Activated CD8-positive, alpha-beta T cell treated with anti-CD3 and anti-CD28 coated beads, Interleukin-2, amount 10 ng/mL, durations not matched to agents 7 days and 5 days (primary cell): ENCODE measurements at regions of chr1 and their contacts with region 1.

Region 1: DNA sequence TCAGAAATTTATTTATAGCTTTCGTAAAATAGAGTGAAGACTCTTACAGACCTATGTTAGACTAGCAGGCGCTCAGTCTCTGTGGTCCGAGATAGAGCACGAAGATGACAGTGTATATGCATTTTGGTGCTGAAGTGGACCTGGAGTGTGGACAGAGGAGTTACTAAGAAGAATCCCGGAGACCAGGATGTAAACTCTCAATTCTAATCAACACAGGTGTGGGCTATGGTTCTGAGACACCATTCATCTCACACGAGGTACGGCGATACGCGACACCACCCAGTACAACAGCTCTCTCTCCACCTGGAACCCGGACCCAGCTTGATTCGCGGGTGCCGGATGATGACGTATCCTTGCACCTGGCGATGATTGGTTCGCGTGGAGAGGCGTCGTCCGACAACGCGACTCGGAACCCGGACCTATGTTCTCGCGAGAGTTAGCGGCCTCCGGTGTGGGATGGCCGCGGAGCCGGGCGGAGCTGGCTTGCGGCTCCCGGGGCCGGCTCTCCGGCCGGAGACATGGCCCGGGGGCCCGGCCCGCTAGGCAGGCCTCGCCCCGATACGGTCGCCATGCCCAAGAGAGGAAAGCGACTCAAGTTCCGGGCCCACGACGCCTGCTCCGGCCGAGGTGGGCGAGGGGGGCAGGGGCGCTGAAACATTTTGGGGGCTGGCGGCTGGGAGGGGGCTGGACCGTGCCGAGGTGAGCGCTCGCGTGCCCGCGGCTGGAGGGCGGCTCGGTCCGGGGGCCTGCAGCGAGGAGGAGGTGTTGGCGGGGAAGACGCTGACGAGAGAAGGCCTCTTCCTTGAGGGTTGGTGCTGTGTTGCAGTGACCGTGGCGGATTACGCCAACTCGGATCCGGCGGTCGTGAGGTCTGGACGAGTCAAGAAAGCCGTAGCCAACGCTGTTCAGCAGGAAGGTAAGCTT is at the start of gene TMEM183A:
- DNase-seq: peak; percentile 98
- ATAC-seq: peak; percentile 91
- H3K4me3 Mint-ChIP-seq: peak within 1 kb of the TSS; percentile 88
- H3K27ac Mint-ChIP-seq: peak within 1 kb of the TSS; percentile 96
- H3K4me1 Mint-ChIP-seq: peaks cover 30% of the 10 kb centered on the region
- H3K27me3 Mint-ChIP-seq: no peaks in the 10 kb centered on the region
- total RNA-seq, gene TMEM183A: 78.3 to 81.3 TPM

Region 2: DNA sequence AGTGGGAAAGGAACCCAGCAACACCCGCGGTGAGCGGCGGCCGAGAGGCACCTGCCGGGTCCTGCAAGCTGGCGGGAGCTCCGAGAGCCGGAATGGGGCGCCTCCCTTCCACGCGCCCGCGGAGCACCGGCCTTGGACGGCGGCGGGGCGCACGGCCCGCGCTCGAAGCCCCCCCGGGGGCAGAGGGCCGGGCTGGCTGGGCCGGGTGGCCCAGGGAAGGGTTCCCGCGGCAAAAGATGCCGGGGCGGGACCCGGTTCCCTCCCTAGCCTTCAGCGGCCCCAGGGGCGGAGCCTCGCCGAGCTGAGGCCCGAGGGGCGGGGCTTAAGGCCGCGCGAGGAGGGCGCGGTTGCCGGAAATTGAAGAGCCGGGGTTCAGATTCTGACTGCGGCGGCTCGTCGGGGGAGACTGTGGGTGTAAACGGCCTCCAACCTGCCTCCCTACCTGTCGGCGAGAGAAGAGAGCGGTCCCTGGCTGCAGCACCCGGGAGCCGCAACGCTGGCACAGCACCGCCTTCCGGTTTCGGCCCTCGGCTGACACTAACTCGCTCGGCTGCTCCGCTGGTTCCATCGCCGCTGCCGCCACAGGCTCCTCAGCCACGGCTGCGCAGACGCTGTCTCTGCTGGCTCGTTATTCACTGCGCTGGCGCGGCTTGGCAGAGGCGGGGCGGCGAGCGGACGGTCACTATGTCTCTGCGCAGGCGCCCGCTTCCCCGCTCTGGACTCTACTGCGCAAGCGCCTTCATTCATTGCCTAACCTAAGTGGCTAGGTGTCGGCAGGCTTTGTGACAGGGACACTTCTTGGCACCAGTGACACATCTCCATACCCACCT is 118.5 kb before region 1 on chr1 and contains the start of gene RABIF:
- CTCF ChIA-PET with region 1: no interaction called
- POLR2A ChIA-PET with region 1: interaction called, 12 read pairs
- DNase-seq: peak; percentile 97
- ATAC-seq: peak; percentile 96
- H3K4me3 Mint-ChIP-seq: peak within 1 kb of the TSS; percentile 94
- H3K27ac Mint-ChIP-seq: peak within 1 kb of the TSS; percentile 98
- H3K4me1 Mint-ChIP-seq: peaks cover 19% of the 10 kb centered on the region
- H3K27me3 Mint-ChIP-seq: no peaks in the 10 kb centered on the region
- total RNA-seq, gene RABIF: 13.6 TPM

Region 3: DNA sequence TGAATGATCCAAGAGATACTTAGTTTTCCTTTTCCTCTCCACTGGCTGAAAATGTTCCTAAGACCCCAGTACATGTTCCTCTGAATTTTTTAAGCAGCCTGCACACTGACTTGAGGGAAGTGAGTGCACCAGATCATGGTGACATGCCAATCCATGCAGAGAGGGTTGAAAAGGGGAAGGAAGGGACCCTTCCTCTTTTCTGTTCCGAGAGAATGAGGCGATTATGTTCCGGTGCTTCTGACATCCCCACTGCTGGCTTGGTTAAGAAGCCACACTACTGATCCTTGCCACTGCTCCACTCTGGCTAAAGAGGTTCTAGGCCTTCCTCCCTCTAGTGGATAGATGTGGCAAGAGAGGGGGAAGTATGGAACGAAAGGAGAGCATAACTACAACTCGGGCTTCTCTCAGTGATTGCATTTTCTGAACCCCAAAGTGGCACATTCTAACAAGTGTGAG is 38.3 kb before region 1 on chr1:
- CTCF ChIA-PET with region 1: interaction called, 6 read pairs
- POLR2A ChIA-PET with region 1: interaction called, 19 read pairs
- DNase-seq: peak; percentile 60
- ATAC-seq: peak; percentile 54
- H3K4me3 Mint-ChIP-seq: no peak overlapping the region
- H3K27ac Mint-ChIP-seq: peak overlapping the region; percentile 44
- H3K4me1 Mint-ChIP-seq: peaks cover 30% of the 10 kb centered on the region
- H3K27me3 Mint-ChIP-seq: peaks cover 4% of the 10 kb centered on the region

Region 4: GRCh38 chr1:203026031-203026989 is 19.1 kb after region 1 on chr1 and contains the start of gene PPFIA4:
- CTCF ChIA-PET with region 1: interaction called, 3 read pairs
- POLR2A ChIA-PET with region 1: interaction called, 12 read pairs
- DNase-seq: peak; percentile 90
- ATAC-seq: peak; percentile 94
- H3K4me3 Mint-ChIP-seq: peak within 1 kb of the TSS; percentile 73
- H3K27ac Mint-ChIP-seq: peak within 1 kb of the TSS; percentile 70
- H3K4me1 Mint-ChIP-seq: peaks cover 21% of the 10 kb centered on the region
- H3K27me3 Mint-ChIP-seq: peaks cover 8% of the 10 kb centered on the region
- total RNA-seq, gene PPFIA4: 31.9 to 32.0 TPM

Region 5: GRCh38 chr1:203046984-203047630 is 39.9 kb after region 1 on chr1:
- CTCF ChIA-PET with region 1: no interaction called
- POLR2A ChIA-PET with region 1: no interaction called
- DNase-seq: no peak
- ATAC-seq: no peak
- H3K4me3 Mint-ChIP-seq: no peak overlapping the region
- H3K27ac Mint-ChIP-seq: no peak overlapping the region
- H3K4me1 Mint-ChIP-seq: no peaks in the 10 kb centered on the region
- H3K27me3 Mint-ChIP-seq: no peaks in the 10 kb centered on the region